ENCODE measurements at regions of chr10 and their contacts with region 1.

Region 1: DNA sequence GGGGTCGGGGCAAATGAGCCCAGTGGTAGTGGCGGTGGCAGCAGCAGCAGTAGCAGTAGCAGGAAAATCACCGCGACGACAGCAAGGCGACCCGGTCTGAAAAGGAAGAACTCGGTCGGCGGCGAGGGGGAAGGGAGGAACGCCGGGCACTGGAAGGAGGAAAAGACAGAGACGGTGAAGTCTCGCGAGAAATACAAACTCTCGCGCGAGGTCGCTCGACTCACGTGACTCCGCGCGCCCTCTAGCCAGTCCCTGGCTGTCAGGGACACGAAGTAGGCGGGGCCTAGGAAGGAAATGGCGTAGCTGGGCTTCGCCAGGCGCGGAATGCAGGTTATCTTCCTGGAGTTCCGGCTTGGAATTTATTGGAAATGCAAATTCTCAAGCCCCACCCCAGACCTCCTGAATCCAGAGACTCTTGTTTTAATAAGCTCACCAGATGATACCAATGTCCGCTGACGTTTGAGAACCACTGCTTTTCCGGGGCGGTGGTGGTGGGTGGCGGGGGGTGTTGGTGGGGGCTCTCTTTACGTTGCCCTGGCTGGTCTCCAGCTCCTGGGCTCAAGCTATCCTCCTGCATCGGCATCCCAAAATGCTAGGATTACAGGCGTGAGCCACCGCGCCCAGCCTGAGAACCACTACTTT is at the start of gene SMNDC1:
- DNase-seq: peak; percentile 99
- H3K4me3 Mint-ChIP-seq: peak within 1 kb of the TSS; percentile 97
- H3K27ac Mint-ChIP-seq: peak within 1 kb of the TSS; percentile 95
- H3K4me1 Mint-ChIP-seq: peaks cover 39% of the 10 kb centered on the region
- H3K27me3 Mint-ChIP-seq: no peaks in the 10 kb centered on the region
- total RNA-seq, gene SMNDC1: 46.2 TPM in 2 replicates

Region 2: DNA sequence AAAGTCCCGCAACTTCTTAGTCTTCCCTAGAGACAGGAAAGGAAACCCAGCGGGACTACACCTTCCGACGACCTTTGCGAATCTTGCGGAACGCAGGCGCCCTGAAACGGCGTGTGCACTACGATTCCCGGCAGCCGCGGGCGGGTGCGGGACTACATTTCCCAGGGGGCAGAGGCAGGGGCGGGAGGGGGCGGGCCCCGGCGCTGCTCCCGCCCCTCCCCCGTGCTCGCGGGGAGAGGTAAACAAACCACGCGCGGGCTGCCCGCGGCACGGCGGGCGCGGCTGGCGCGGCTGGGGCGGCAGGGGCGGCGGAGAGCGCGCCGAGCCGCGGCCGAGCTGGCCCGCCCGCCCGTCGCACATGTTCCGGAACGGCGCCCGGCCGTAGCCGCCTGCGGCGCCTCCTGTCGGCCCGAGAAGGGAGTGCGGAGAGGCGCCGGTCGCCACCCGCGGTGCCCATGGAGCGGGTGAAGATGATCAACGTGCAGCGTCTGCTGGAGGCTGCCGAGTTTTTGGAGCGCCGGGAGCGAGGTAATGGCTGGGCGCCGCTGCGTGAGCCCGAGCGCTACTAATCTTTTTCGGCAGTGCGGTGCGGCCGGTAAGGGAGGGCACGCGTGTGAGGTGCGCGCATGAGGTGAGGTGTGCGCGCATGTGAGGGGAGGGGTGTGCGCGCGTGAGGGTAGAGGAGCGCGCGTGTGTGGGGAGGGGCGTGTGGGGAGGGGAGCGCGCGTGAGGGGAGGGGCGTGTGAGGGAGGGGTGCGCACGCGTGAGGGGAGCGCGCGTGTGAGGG is 79.0 kb before region 1 on chr10:
- intact Hi-C with region 1: loop called (anchors 2 kb)
- DNase-seq: peak; percentile 95
- H3K4me3 Mint-ChIP-seq: peak overlapping the region; percentile 99
- H3K27ac Mint-ChIP-seq: peak overlapping the region; percentile 99
- H3K4me1 Mint-ChIP-seq: peaks cover 45% of the 10 kb centered on the region
- H3K27me3 Mint-ChIP-seq: peaks cover 3% of the 10 kb centered on the region

Region 3: GRCh38 chr10:110502851-110503301 is 198.0 kb after region 1 on chr10:
- intact Hi-C with region 1: loop called (anchors 1 kb)
- DNase-seq: peak; percentile 84
- H3K4me3 Mint-ChIP-seq: peak overlapping the region; percentile 99
- H3K27ac Mint-ChIP-seq: peak overlapping the region; percentile 92
- H3K4me1 Mint-ChIP-seq: peaks cover 78% of the 10 kb centered on the region
- H3K27me3 Mint-ChIP-seq: no peaks in the 10 kb centered on the region

Region 4: DNA sequence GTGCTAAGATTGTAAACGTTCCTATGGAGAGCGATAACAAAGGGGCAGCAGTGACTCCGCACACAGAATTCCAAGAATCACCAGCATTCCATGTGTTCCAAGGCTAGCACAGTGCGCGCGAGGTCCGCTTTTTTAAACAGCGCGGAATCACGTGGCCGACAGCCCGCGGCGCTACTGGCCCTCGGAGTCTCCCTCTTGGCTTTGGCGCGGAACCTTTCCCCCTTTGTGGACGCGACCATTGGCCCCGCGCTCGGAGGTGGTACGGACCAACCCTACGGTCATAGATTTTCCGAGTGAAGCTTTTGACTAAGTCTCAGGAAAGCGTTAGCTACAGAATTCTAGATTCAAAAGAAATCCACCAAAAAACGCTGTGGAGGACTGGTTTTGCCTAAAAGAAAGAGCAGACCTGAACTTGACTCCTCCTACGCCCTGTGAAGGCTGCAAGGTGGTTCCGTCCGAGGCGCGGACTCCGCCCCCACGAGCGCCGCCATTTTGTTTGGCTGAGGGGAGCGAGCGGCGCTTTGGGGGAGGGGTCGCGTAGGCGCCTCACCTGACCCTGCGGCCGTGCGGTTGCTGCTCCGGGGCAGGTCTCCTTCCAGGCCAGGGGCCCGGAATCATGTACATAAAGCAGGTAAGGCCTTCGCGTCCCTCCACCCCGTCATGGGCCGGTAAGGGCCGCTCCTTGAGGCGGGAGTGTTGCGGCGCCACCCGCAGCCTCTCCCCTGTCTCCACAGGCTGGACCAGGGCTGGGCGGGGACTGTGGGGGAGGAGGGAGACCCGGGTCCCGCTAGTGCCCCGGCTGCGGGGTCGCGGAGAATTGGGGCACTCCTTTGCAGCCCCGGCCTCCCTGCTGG is 262.5 kb after region 1 on chr10 and contains the start of gene SMC3:
- intact Hi-C with region 1: loop called (anchors 1 kb)
- DNase-seq: peak; percentile 98
- H3K4me3 Mint-ChIP-seq: peak within 1 kb of the TSS; percentile 97
- H3K27ac Mint-ChIP-seq: peak within 1 kb of the TSS; percentile 98
- H3K4me1 Mint-ChIP-seq: peaks cover 32% of the 10 kb centered on the region
- H3K27me3 Mint-ChIP-seq: peaks cover 21% of the 10 kb centered on the region
- total RNA-seq, gene SMC3: 82.2 and 87.3 TPM in 2 replicates

Region 5: DNA sequence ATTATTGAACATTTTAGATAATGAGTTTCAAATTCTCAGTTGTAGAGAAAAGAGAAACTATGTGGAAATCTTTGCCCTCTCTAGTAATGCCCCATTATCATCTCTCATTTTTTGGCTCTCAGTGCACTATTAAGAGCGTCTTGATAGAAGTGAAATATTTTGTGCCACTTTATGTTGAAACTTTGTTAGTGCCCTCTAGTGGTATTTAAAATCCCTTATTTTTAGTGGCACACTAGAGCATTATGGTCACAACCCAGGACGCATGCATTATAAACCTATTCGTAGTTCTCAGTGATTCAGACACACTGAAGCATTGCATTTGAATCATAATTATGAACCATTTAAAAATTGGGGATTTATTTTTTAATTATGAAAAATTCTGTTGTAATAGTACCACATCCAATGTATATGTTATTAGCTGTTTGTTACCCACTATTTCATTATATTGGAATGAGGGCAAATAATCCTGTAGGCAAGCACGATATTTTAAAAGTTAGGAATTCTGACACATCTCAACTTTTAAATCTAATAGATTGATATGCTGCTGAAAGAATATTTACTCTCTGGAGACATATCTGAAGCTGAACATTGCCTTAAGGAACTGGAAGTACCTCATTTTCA is 588.8 kb after region 1 on chr10:
- intact Hi-C with region 1: loop called (anchors 5 kb)
- DNase-seq: peak; percentile 61
- H3K4me3 Mint-ChIP-seq: no peak overlapping the region
- H3K27ac Mint-ChIP-seq: no peak overlapping the region
- H3K4me1 Mint-ChIP-seq: peaks cover 9% of the 10 kb centered on the region
- H3K27me3 Mint-ChIP-seq: no peaks in the 10 kb centered on the region

Measured in activated CD4-positive, alpha-beta T cell treated with anti-CD3 and anti-CD28 coated beads, Interleukin-2, amount 10 ng/mL, durations not matched to agents 24 days and 14 days (primary cell).